A549 (cell line): ENCODE measurements at regions of chr1 and their contacts with region 1.

Region 1: GRCh38 chr1:66253330-66253921 is 280.5 kb upstream of the SGIP1 start:
- DNase-seq: peak; percentile 55 to 75
- ATAC-seq: peak; percentile 89 to 91
- H3K4me3 ChIP-seq: no peak overlapping the region
- H3K27ac ChIP-seq: peak overlapping the region; percentile 81 to 87
- H3K4me1 ChIP-seq: peaks cover 53% of the 10 kb centered on the region
- CTCF ChIP-seq: peak; percentile 84
- EP300 ChIP-seq: no peak
- POLR2A ChIP-seq: no peak
- RAD21 ChIP-seq: peak; percentile 95

Region 2: GRCh38 chr1:65958561-65959350 is 294.7 kb before region 1 on chr1:
- CTCF ChIA-PET with region 1: interaction called, 15 read pairs
- POLR2A ChIA-PET with region 1: no interaction called
- DNase-seq: peak; percentile 6 to 65
- ATAC-seq: peak; percentile 59 to 82; a peak in 4 of 6 replicates
- H3K4me3 ChIP-seq: no peak overlapping the region
- H3K27ac ChIP-seq: peak overlapping the region; percentile 66 to 79
- H3K4me1 ChIP-seq: peaks cover 36% of the 10 kb centered on the region
- CTCF ChIP-seq: peak; percentile 89
- EP300 ChIP-seq: no peak
- POLR2A ChIP-seq: no peak
- RAD21 ChIP-seq: peak; percentile 95 to 97

Region 3: GRCh38 chr1:66197785-66198184 is 55.6 kb before region 1 on chr1:
- CTCF ChIA-PET with region 1: no interaction called
- POLR2A ChIA-PET with region 1: no interaction called
- DNase-seq: no peak
- ATAC-seq: no peak
- H3K4me3 ChIP-seq: no peak overlapping the region
- H3K27ac ChIP-seq: peak overlapping the region in 1 of 2 experiments; percentile 48; a peak in 3 of 6 replicates
- H3K4me1 ChIP-seq: peaks cover 25% of the 10 kb centered on the region; the same call in 2 of the 3 replicates
- CTCF ChIP-seq: no peak
- EP300 ChIP-seq: no peak
- POLR2A ChIP-seq: no peak
- RAD21 ChIP-seq: no peak

Region 4: GRCh38 chr1:66436378-66437145 is 183.1 kb after region 1 on chr1:
- CTCF ChIA-PET with region 1: interaction called, 10 read pairs
- POLR2A ChIA-PET with region 1: no interaction called
- DNase-seq: peak; percentile 5 to 41
- ATAC-seq: peak; percentile 66 to 81
- H3K4me3 ChIP-seq: no peak overlapping the region
- H3K27ac ChIP-seq: peak overlapping the region; percentile 35 to 62; a peak in 5 of 6 replicates
- H3K4me1 ChIP-seq: peaks cover 28% of the 10 kb centered on the region
- CTCF ChIP-seq: 0 out of 3 replicates have a peak, but pooled peaks have one; percentile 25
- EP300 ChIP-seq: no peak
- POLR2A ChIP-seq: no peak
- RAD21 ChIP-seq: peak; percentile 18 to 37; a peak in 2 of 5 replicates

Region 5: DNA sequence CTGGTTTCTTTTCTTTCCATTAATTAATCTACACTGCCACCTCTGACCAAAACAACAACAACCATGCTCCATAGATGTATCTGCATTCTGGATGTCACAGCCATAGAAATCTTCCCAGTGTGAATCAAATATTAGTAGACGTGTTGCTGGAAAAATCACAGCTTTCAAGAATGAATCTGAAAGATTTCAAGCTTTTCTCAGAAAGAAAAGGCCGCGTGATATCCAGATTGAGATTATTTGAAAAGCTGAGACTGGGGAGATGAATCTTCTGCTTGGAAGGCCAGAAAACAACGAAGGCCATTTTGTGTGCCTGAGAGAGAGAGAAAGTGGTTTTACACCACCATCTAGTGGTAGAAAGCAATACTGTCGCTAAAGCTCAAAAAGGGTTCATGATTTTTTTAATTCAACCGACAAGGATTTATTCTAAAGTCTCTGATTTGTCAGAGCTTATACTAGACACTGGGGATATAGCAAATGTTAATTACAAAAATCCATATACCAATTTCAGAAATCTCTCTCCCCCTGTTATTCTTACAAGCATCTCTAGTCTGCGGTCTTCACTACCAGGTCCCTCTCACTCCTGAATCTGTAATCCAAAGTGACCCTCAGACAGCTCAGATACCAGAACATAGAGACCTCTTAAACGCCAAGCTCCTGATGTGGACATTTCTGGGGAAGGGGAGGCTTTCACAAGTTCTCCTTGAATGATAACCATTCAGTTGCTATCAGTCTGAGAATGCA is 193.0 kb after region 1 on chr1:
- CTCF ChIA-PET with region 1: interaction called, 175 read pairs
- POLR2A ChIA-PET with region 1: no interaction called
- DNase-seq: peak; percentile 25 to 68
- ATAC-seq: peak; percentile 68 to 87
- H3K4me3 ChIP-seq: no peak overlapping the region
- H3K27ac ChIP-seq: peak overlapping the region; percentile 67 to 83
- H3K4me1 ChIP-seq: peaks cover 27% of the 10 kb centered on the region
- CTCF ChIP-seq: peak; percentile 80
- EP300 ChIP-seq: no peak
- POLR2A ChIP-seq: no peak
- RAD21 ChIP-seq: peak; percentile 89 to 93